GM12878 (cell line): ENCODE measurements at regions of chr1 and their contacts with region 1.

Region 1: GRCh38 chr1:19462781-19463503 is 22.4 kb downstream of the CAPZB start:
- DNase-seq: peak; percentile 77
- ATAC-seq: peak; percentile 71
- H3K4me3 ChIP-seq: no peak overlapping the region
- H3K27ac ChIP-seq: peak overlapping the region; percentile 89
- H3K4me1 ChIP-seq: peaks cover 56% of the 10 kb centered on the region
- H3K27me3 ChIP-seq: no peaks in the 10 kb centered on the region
- CTCF ChIP-seq: no peak
- EP300 ChIP-seq: no peak
- POLR2A ChIP-seq: no peak
- RAD21 ChIP-seq: no peak

Region 2: GRCh38 chr1:19477284-19478249 is 14.6 kb after region 1 on chr1:
- CTCF ChIA-PET with region 1: interaction called, 15 read pairs
- POLR2A ChIA-PET with region 1: interaction called, 7 read pairs
- RAD21 ChIA-PET with region 1: interaction called, 10 read pairs
- SMC1A ChIA-PET with region 1: interaction called, 22 read pairs
- in situ Hi-C with region 1: no loop called
- intact Hi-C with region 1: no loop called
- DNase-seq: peak; percentile 74
- ATAC-seq: peak; percentile 84
- H3K4me3 ChIP-seq: peak overlapping the region; percentile 58
- H3K27ac ChIP-seq: peak overlapping the region; percentile 94
- H3K4me1 ChIP-seq: peaks cover 48% of the 10 kb centered on the region
- H3K27me3 ChIP-seq: no peaks in the 10 kb centered on the region
- CTCF ChIP-seq: no peak
- EP300 ChIP-seq: no peak; a peak in 1 of 4 replicates
- POLR2A ChIP-seq: peak; percentile 62
- RAD21 ChIP-seq: no peak

Region 3: GRCh38 chr1:19688041-19688842 is 225.3 kb after region 1 on chr1:
- CTCF ChIA-PET with region 1: no interaction called
- POLR2A ChIA-PET with region 1: no interaction called
- RAD21 ChIA-PET with region 1: no interaction called
- SMC1A ChIA-PET with region 1: no interaction called
- in situ Hi-C with region 1: no loop called
- intact Hi-C with region 1: no loop called
- DNase-seq: no peak
- ATAC-seq: no peak
- H3K4me3 ChIP-seq: no peak overlapping the region
- H3K27ac ChIP-seq: no peak overlapping the region
- H3K4me1 ChIP-seq: no peaks in the 10 kb centered on the region
- H3K27me3 ChIP-seq: no peaks in the 10 kb centered on the region
- CTCF ChIP-seq: no peak
- EP300 ChIP-seq: no peak
- POLR2A ChIP-seq: no peak
- RAD21 ChIP-seq: no peak